ENCODE measurements at regions of chr6 and their contacts with region 1.

Region 1: GRCh38 chr6:113578691-113579090 is 278.5 kb upstream of the MARCKS start:
- DNase-seq: no peak
- H3K4me3 ChIP-seq: no peak overlapping the region
- H3K27ac ChIP-seq: no peak overlapping the region
- H3K27me3 ChIP-seq: no peaks in the 10 kb centered on the region
- CTCF ChIP-seq: no peak

Region 2: DNA sequence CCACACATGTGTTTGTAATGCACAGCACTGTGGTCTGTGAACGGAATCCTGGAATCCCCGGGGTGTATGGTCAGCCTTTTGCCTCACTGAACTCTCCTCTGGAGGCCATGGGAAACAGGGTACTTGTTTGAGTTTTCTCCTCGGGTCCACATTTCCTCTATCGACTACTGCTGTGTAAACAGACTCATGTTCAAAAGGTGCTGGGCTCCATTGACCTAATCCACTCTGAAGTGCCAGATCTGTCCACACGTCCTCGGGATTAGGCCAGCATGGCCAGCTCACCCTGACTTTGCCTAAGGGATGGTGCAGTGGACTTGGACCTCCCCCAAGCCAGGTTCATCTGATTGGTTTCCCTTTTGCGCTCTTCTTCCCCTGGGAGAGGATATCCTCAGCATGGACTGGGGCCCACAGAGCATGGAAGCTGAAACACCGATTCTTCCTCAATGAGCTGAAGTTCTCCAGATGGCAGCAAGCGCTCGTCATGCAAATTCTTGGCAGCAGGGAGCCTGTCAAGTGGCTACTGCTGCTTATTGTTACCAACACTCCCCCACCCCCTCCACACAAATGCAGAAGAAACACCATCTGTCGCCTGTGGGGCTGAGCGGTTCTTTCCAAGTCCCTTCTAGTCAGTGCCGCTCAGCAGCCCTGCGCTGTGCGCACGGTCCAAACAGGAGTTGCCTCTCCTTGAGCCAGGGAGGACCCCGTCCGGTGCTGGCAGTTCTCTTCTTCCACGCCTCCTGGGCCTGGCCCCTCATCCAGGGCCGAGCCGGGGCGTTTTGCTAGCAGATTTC is 14.1 kb before region 1 on chr6:
- CTCF ChIA-PET with region 1: no interaction called
- POLR2A ChIA-PET with region 1: interaction called, 11 read pairs
- DNase-seq: peak; percentile 79
- H3K4me3 ChIP-seq: peak overlapping the region; percentile 27
- H3K27ac ChIP-seq: peak overlapping the region; percentile 90
- H3K27me3 ChIP-seq: no peaks in the 10 kb centered on the region
- CTCF ChIP-seq: no peak